ENCODE measurements at regions of chr12 and their contacts with region 1.

Region 1: DNA sequence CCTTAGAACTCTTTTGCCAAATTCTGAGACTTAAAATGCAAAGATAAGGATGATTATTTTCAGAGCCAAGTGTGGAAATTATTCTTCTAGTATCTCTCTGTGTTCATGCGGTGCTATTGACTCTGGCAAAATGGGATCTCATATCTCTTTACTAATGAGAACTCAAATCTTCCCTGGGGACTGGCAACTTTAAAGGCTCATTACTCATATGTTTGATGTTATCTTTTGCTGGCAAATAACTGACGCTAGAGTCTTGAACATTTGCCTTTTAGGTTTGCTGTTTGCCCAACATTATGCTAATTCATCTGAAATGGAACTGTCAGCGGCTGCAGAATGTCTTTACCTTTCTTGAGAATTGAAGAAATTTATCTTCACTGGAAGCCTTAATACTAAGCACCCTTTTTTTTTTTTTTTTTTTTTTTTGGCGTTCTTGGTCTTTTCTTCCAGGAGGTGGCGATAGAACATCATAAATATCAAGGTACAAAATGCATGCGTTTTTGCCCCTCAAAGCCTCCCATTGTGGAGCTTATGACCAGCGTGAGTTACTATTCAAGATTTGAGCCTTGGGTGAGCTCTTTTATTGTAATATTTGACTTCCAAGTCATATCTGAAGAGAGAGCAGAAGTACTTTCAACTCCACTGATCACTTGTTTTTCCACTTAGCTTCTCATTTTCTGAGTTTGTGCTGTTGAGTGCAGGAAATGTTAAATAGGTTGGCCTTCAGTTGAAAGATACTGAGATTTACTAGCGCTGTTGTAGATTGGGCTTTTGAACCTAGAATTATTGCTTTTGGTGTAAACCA is 86.6 kb downstream of the CAND1 start:
- DNase-seq: peak in 4 of 9 experiments; percentile 11 to 76 (median 44)
- ATAC-seq: peak; percentile 61
- H3K4me3 ChIP-seq: no peak overlapping the region
- H3K4me3 Mint-ChIP-seq: no peak overlapping the region
- H3K27ac ChIP-seq: no peak overlapping the region
- H3K27ac Mint-ChIP-seq: no peak overlapping the region
- H3K4me1 ChIP-seq: peaks cover 5% of the 10 kb centered on the region
- H3K4me1 Mint-ChIP-seq: peaks cover 7% of the 10 kb centered on the region
- H3K27me3 ChIP-seq: no peaks in the 10 kb centered on the region
- H3K27me3 Mint-ChIP-seq: no peaks in the 10 kb centered on the region
- CTCF ChIP-seq: peak; percentile 76

Region 2: GRCh38 chr12:67056294-67056693 is 299.5 kb before region 1 on chr12:
- CTCF ChIA-PET with region 1: no interaction called
- POLR2A ChIA-PET with region 1: no interaction called
- intact Hi-C with region 1: no loop called
- DNase-seq: no peak
- ATAC-seq: no peak
- H3K4me3 ChIP-seq: no peak overlapping the region
- H3K4me3 Mint-ChIP-seq: no peak overlapping the region
- H3K27ac ChIP-seq: no peak overlapping the region
- H3K27ac Mint-ChIP-seq: no peak overlapping the region
- H3K4me1 ChIP-seq: no peaks in the 10 kb centered on the region
- H3K4me1 Mint-ChIP-seq: no peaks in the 10 kb centered on the region
- H3K27me3 ChIP-seq: peaks cover 0 to 2% of the 10 kb centered on the region in 2 experiments
- H3K27me3 Mint-ChIP-seq: peaks cover 8% of the 10 kb centered on the region
- CTCF ChIP-seq: no peak

Region 3: GRCh38 chr12:67661311-67662021 is 305.7 kb after region 1 on chr12:
- CTCF ChIA-PET with region 1: interaction called, 10 read pairs
- POLR2A ChIA-PET with region 1: interaction called, 3 read pairs
- intact Hi-C with region 1: loop called (anchors 2 to 5 kb)
- DNase-seq: no peak
- ATAC-seq: no peak
- H3K4me3 ChIP-seq: no peak overlapping the region
- H3K4me3 Mint-ChIP-seq: peak overlapping the region; percentile 44
- H3K27ac ChIP-seq: no peak overlapping the region
- H3K27ac Mint-ChIP-seq: peak overlapping the region; percentile 70
- H3K4me1 ChIP-seq: peaks cover 92% of the 10 kb centered on the region
- H3K4me1 Mint-ChIP-seq: peaks cover 90% of the 10 kb centered on the region
- H3K27me3 ChIP-seq: no peaks in the 10 kb centered on the region
- H3K27me3 Mint-ChIP-seq: no peaks in the 10 kb centered on the region
- CTCF ChIP-seq: no peak

Region 4: DNA sequence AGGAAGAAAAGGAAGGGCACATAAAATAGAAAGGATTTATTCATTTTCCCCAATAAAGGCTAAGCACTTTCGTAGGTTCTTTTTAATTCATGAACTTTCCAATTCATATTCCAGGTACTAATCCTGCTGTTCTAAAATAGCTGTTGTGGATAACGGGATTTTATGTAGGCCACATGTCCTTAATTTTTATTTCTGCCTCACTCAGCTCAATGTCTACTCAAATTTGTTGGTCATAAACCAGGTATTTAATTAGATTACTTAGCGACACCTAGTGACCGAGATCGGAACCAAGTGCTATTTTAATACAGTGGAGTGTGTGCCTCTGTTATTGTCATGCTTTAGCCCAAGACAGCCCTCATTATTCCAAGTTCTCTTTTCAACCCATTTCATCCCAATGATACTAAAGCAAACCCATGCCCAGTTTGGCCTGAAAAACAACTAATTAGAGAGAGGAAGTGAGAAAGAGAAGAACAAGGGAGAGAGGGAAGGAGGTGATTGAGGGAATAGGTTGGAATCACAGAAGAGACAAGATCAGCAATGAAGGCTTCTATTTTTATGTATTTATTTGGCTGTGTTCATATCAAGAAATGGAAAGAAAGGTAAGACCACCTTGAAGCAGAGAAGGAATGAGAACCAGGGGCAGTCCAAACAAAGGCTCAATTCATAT is 587.6 kb after region 1 on chr12:
- CTCF ChIA-PET with region 1: interaction called, 263 read pairs
- POLR2A ChIA-PET with region 1: interaction called, 7 read pairs
- intact Hi-C with region 1: loop called (anchors 1 kb)
- DNase-seq: peak; percentile 30 to 80 (median 69)
- ATAC-seq: peak; percentile 78
- H3K4me3 ChIP-seq: no peak overlapping the region
- H3K4me3 Mint-ChIP-seq: no peak overlapping the region
- H3K27ac ChIP-seq: no peak overlapping the region
- H3K27ac Mint-ChIP-seq: no peak overlapping the region
- H3K4me1 ChIP-seq: no peaks in the 10 kb centered on the region
- H3K4me1 Mint-ChIP-seq: peaks cover 7% of the 10 kb centered on the region
- H3K27me3 ChIP-seq: no peaks in the 10 kb centered on the region
- H3K27me3 Mint-ChIP-seq: peaks cover 6% of the 10 kb centered on the region
- CTCF ChIP-seq: peak; percentile 83

Region 5: DNA sequence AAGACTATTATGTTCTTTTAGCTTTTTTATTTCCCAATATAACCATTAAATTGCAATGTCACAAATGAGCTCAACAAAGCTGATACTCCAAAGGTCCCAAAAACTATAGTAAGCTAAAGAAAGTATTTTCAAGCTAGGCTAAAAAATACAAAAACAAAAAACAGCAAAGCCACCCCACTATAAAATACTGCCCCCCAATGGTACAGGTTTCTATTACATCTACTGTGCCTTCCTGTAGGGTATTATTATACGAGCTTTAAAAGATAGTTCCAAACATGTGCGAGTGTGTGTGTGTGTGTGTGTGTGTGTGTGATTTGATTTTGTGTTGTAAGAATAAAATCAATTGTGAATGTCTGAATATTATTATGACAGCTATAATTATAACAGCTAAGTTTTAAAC is 802.7 kb after region 1 on chr12:
- CTCF ChIA-PET with region 1: interaction called, 7 read pairs
- POLR2A ChIA-PET with region 1: no interaction called
- intact Hi-C with region 1: loop called in 1 of 2 experiments (anchors 5 kb)
- DNase-seq: peak in 4 of 9 experiments; percentile 21 to 79 (median 49)
- ATAC-seq: peak; percentile 62
- H3K4me3 ChIP-seq: peak overlapping the region in 1 of 2 experiments; percentile 57
- H3K4me3 Mint-ChIP-seq: peak overlapping the region; percentile 33
- H3K27ac ChIP-seq: peak overlapping the region in 1 of 2 experiments; percentile 80
- H3K27ac Mint-ChIP-seq: no peak overlapping the region
- H3K4me1 ChIP-seq: peaks cover 5% of the 10 kb centered on the region
- H3K4me1 Mint-ChIP-seq: peaks cover 51% of the 10 kb centered on the region
- H3K27me3 ChIP-seq: no peaks in the 10 kb centered on the region
- H3K27me3 Mint-ChIP-seq: no peaks in the 10 kb centered on the region
- CTCF ChIP-seq: peak; percentile 61

Measured in CD8-positive, alpha-beta T cell (primary cell).